A673 (cell line): ENCODE measurements at regions of chr11 and their contacts with region 1.

Region 1: GRCh38 chr11:13210424-13210823 is 67.2 kb upstream of the BMAL1 start:
- DNase-seq: peak; percentile 71
- H3K4me3 ChIP-seq: no peak overlapping the region
- H3K27ac ChIP-seq: no peak overlapping the region
- H3K4me1 ChIP-seq: peaks cover 18% of the 10 kb centered on the region
- H3K27me3 ChIP-seq: no peaks in the 10 kb centered on the region
- CTCF ChIP-seq: peak; percentile 67

Region 2: DNA sequence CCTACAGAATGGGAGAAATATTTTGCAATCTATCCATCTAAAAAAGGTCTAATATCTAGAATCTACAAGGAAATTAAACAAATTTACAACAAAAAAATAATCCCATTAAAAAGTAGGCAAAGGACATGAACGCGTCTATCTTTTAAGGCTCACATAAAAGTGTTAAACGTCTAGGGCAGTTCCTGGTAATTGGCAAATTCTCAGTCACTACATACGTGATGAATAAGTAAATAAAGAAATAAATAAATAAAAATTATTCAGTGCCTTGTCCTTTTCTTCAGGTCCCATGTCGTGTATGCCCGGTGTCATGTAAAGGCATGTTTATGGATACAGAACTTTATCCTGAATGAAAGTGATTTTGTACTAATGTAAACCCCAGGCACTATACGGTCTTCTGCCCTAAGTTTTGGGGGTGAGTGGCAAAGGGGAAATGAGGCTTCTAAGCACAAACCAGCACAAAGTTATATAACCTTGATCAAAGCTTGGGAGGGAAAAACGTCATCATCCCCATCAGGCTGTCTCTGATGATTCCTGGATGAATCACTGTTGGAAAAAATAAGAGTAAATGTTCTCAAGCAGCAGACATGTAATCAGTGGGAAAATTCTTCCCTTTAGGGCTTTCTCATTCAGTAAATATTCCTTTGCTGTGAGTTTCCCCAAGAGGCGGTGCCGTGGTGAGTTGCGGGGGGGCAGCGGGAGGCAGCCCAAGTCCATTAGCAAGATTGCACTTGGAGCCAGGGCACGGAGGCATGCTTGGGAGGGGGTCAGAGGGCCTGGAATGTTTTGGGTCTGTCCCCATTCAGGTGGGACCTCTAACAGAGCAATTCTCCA is 1130.5 kb before region 1 on chr11:
- CTCF ChIA-PET with region 1: no interaction called
- POLR2A ChIA-PET with region 1: interaction called, 14 read pairs
- intact Hi-C with region 1: no loop called
- DNase-seq: no peak
- H3K4me3 ChIP-seq: no peak overlapping the region
- H3K27ac ChIP-seq: no peak overlapping the region
- H3K4me1 ChIP-seq: no peaks in the 10 kb centered on the region
- H3K27me3 ChIP-seq: no peaks in the 10 kb centered on the region
- CTCF ChIP-seq: no peak

Region 3: GRCh38 chr11:13238879-13239514 is 28.6 kb after region 1 on chr11:
- CTCF ChIA-PET with region 1: no interaction called
- POLR2A ChIA-PET with region 1: no interaction called
- intact Hi-C with region 1: loop called (anchors 1 kb)
- DNase-seq: peak; percentile 73
- H3K4me3 ChIP-seq: no peak overlapping the region
- H3K27ac ChIP-seq: no peak overlapping the region
- H3K4me1 ChIP-seq: no peaks in the 10 kb centered on the region
- H3K27me3 ChIP-seq: peaks cover 3% of the 10 kb centered on the region
- CTCF ChIP-seq: peak; percentile 85

Region 4: GRCh38 chr11:13276832-13277767 is 66.7 kb after region 1 on chr11:
- CTCF ChIA-PET with region 1: no interaction called
- POLR2A ChIA-PET with region 1: no interaction called
- intact Hi-C with region 1: loop called (anchors 10 kb)
- DNase-seq: peak; percentile 97
- H3K4me3 ChIP-seq: peak overlapping the region; percentile 63
- H3K27ac ChIP-seq: no peak overlapping the region
- H3K4me1 ChIP-seq: peaks cover 3% of the 10 kb centered on the region
- H3K27me3 ChIP-seq: peaks cover 71% of the 10 kb centered on the region
- CTCF ChIP-seq: no peak

Region 5: DNA sequence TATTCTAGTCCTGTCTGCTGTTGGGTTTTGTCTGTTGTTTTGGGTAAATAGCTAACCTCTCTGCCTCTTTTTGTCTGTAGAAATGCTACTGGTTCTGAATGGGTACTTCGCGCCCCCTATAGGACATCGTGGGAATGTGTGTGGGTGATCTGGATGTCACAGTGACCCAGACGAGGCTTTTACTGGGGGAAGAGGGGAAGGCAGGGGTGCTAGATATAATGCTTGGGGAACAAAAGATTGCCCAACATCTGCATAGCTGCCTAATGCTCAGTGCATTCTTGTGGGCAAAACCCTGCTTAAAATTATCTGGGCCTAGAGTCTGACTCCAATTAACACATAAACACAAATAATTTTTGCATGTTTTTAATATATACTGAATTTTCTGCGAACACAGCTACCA is 124.9 kb after region 1 on chr11:
- CTCF ChIA-PET with region 1: interaction called, 4 read pairs
- POLR2A ChIA-PET with region 1: no interaction called
- intact Hi-C with region 1: loop called (anchors 1 kb)
- DNase-seq: peak; percentile 75
- H3K4me3 ChIP-seq: no peak overlapping the region
- H3K27ac ChIP-seq: no peak overlapping the region
- H3K4me1 ChIP-seq: peaks cover 4% of the 10 kb centered on the region
- H3K27me3 ChIP-seq: no peaks in the 10 kb centered on the region
- CTCF ChIP-seq: peak; percentile 85